Activated CD4-positive, alpha-beta memory T cell treated with anti-CD3 and anti-CD28 coated beads for 36 hours (primary cell): ENCODE measurements at regions of chr5 and their contacts with region 1.

Region 1: GRCh38 chr5:32585446-32586275 is at the start of gene SUB1:
- DNase-seq: peak; percentile 96
- H3K4me3 Mint-ChIP-seq: peak within 1 kb of the TSS; percentile 86
- H3K27ac Mint-ChIP-seq: peak within 1 kb of the TSS; percentile 96
- H3K4me1 Mint-ChIP-seq: peaks cover 61% of the 10 kb centered on the region
- H3K27me3 Mint-ChIP-seq: no peaks in the 10 kb centered on the region
- total RNA-seq, gene SUB1: 528 to 531 TPM

Region 2: GRCh38 chr5:32312647-32313523 is 272.8 kb before region 1 on chr5 and contains the start of gene MTMR12:
- CTCF ChIA-PET with region 1: interaction called, 3 read pairs
- POLR2A ChIA-PET with region 1: no interaction called
- intact Hi-C with region 1: loop called (anchors 1 kb)
- DNase-seq: peak; percentile 100
- H3K4me3 Mint-ChIP-seq: peak within 1 kb of the TSS; percentile 86
- H3K27ac Mint-ChIP-seq: peak within 1 kb of the TSS; percentile 85
- H3K4me1 Mint-ChIP-seq: peaks cover 22% of the 10 kb centered on the region
- H3K27me3 Mint-ChIP-seq: no peaks in the 10 kb centered on the region
- total RNA-seq, gene MTMR12: 22.3 to 22.4 TPM

Region 3: DNA sequence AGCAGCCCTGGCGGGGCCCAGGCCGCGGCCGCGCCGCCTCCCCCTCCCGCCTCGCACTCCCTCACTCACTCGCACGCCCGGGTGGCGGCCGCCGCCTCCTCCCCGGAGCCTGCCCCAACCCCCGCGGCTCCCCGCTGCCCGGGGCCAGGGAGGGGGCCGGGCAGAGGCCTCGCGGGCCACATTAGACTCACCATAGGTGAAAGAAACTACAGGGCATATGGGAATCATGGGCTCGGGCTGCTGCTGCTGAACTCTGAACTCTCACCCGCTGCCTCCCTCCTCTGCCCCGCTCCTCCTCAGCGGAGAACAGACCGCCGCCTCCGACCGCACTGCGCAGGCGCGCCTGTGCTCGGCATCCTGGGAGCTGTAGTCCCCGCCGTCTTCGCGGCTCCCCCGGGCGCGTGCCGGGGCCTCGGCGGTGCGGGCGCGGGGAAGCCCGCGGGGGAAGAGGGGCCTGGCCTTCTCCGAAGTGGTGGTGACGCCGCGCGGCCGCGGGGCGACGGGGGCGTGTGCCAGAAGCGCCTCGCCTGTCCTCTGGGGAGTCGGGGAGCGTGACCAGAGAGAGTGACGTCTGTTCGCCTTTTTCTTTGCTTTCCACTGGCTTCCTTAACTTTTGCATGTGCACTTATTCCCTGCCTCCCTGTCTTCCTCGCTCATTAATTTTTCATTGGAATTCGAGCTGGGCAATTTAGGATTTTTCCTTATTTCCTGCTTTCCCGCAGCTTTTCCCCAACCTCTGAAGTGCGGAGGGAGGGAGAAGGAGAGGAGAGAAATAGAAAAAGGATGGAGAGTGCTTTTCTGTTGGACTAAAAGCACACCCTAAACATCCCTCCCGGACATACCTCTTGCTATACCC is 141.0 kb before region 1 on chr5 and contains the start of gene ZFR:
- CTCF ChIA-PET with region 1: interaction called, 9 read pairs
- POLR2A ChIA-PET with region 1: interaction called, 6 read pairs
- intact Hi-C with region 1: loop called (anchors 1 kb)
- DNase-seq: peak; percentile 96
- H3K4me3 Mint-ChIP-seq: peak within 1 kb of the TSS; percentile 92
- H3K27ac Mint-ChIP-seq: peak within 1 kb of the TSS; percentile 98
- H3K4me1 Mint-ChIP-seq: peaks cover 38% of the 10 kb centered on the region
- H3K27me3 Mint-ChIP-seq: no peaks in the 10 kb centered on the region
- total RNA-seq, gene ZFR: 58.1 to 61.1 TPM

Region 4: GRCh38 chr5:32489791-32490582 is 95.7 kb before region 1 on chr5:
- CTCF ChIA-PET with region 1: interaction called, 342 read pairs
- POLR2A ChIA-PET with region 1: interaction called, 19 read pairs
- intact Hi-C with region 1: loop called (anchors 1 kb)
- DNase-seq: peak; percentile 77
- H3K4me3 Mint-ChIP-seq: no peak overlapping the region
- H3K27ac Mint-ChIP-seq: no peak overlapping the region
- H3K4me1 Mint-ChIP-seq: no peaks in the 10 kb centered on the region
- H3K27me3 Mint-ChIP-seq: no peaks in the 10 kb centered on the region

Region 5: GRCh38 chr5:32522429-32523143 is 63.1 kb before region 1 on chr5:
- CTCF ChIA-PET with region 1: interaction called, 19 read pairs
- POLR2A ChIA-PET with region 1: no interaction called
- intact Hi-C with region 1: no loop called
- DNase-seq: peak; percentile 73
- H3K4me3 Mint-ChIP-seq: no peak overlapping the region
- H3K27ac Mint-ChIP-seq: no peak overlapping the region
- H3K4me1 Mint-ChIP-seq: peaks cover 15% of the 10 kb centered on the region
- H3K27me3 Mint-ChIP-seq: no peaks in the 10 kb centered on the region

Region 6: DNA sequence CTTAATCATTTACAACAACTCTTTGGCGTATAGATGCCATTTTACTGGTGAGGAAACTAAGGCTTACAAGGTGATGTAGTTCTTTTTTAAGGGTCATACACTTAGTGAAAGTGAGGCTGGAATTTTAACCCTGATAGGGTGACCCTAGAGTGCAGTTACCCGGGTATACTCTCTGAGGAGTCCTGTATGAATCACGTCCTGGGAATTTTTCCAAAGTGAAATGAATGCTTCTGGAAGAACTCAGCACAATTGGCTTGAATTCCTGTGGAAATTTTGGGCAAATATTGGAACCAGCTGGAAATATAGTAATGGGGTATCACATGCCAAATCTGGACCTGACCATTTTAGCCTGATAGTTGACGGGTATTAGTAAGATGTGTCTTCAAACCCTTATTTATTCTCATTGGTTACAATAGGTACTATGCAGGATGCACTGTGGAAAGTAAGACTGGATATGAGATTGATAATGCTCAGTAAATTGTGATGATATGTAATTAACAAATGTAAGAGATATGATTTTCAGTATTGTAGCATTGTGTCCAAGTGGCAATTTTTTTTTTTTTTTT is 14.5 kb after region 1 on chr5:
- CTCF ChIA-PET with region 1: interaction called, 19 read pairs
- POLR2A ChIA-PET with region 1: no interaction called
- intact Hi-C with region 1: no loop called
- DNase-seq: no peak
- H3K4me3 Mint-ChIP-seq: no peak overlapping the region
- H3K27ac Mint-ChIP-seq: no peak overlapping the region
- H3K4me1 Mint-ChIP-seq: peaks cover 47% of the 10 kb centered on the region
- H3K27me3 Mint-ChIP-seq: no peaks in the 10 kb centered on the region

Region 7: GRCh38 chr5:32673272-32673671 is 87.6 kb after region 1 on chr5:
- CTCF ChIA-PET with region 1: no interaction called
- POLR2A ChIA-PET with region 1: no interaction called
- intact Hi-C with region 1: no loop called
- DNase-seq: no peak
- H3K4me3 Mint-ChIP-seq: no peak overlapping the region
- H3K27ac Mint-ChIP-seq: no peak overlapping the region
- H3K4me1 Mint-ChIP-seq: no peaks in the 10 kb centered on the region
- H3K27me3 Mint-ChIP-seq: peaks cover 7% of the 10 kb centered on the region